ENCODE measurements at regions of chr3 and their contacts with region 1.

Region 1: GRCh38 chr3:132416807-132417694 is at the start of gene DNAJC13:
- DNase-seq: peak; percentile 93
- ATAC-seq: peak; percentile 89
- H3K4me3 Mint-ChIP-seq: peak within 1 kb of the TSS; percentile 99
- H3K27ac Mint-ChIP-seq: peak within 1 kb of the TSS; percentile 98
- H3K4me1 Mint-ChIP-seq: peaks cover 32% of the 10 kb centered on the region
- H3K27me3 Mint-ChIP-seq: no peaks in the 10 kb centered on the region
- CTCF ChIP-seq: no peak
- total RNA-seq, gene DNAJC13: 35.9 and 39.8 TPM in 2 replicates

Region 2: DNA sequence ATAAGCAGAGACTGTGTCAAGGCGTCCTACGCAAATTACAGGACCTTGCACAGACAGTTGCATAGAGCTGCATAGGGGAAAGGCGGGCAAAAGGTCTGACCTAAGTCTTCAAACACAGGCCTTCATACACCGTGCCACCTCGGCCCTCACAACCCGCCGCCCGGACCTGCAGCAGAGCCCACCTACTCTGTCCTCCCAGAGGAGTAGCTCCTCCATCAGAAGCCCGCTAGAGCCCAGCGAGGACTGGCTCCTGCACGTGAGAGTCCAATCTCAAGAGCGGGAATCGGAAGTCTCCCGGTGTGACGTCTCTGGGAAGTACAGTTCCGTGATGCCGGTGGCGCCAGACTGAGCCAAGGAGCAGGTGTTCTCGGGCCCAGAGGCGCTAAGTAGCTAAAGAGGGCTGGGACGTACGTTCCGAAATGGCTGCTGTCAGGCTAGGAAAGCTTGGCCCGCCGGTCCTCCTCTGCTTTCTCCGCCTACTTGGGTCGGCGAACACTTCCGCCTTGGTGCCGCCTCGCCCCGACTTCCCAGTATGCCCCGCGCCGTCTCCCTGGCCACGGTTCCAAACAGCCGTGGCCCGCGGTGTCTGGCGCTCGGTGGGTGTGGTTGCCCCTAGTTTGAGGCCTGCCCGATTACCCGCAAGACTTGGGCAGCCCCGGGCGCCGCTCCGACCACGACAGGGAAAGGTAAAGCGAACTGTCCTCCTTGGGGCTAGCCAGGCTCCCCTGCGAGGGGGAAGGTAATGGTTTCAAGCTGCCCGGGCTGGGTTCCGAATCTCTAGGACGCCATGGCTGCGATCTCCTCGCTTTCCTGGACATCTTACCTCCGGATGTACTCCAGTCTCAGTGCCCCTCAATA is 1390.5 kb before region 1 on chr3 and contains the starts of genes ASTE1 and NEK11:
- CTCF ChIA-PET with region 1: no interaction called
- POLR2A ChIA-PET with region 1: interaction called, 3 read pairs
- intact Hi-C with region 1: loop called (anchors 1 kb)
- DNase-seq: peak; percentile 89
- ATAC-seq: peak; percentile 97
- H3K4me3 Mint-ChIP-seq: peak within 1 kb of the TSS; percentile 96
- H3K27ac Mint-ChIP-seq: peak within 1 kb of the TSS; percentile 97
- H3K4me1 Mint-ChIP-seq: peaks cover 52% of the 10 kb centered on the region
- H3K27me3 Mint-ChIP-seq: no peaks in the 10 kb centered on the region
- CTCF ChIP-seq: no peak
- total RNA-seq, gene ASTE1: 15.6 and 16.9 TPM in 2 replicates
- total RNA-seq, gene NEK11: 1.5 and 1.9 TPM in 2 replicates

Region 3: GRCh38 chr3:131502530-131503245 is 914.4 kb before region 1 on chr3 and contains the start of gene MRPL3:
- CTCF ChIA-PET with region 1: no interaction called
- POLR2A ChIA-PET with region 1: no interaction called
- intact Hi-C with region 1: loop called (anchors 1 kb)
- DNase-seq: peak; percentile 73
- ATAC-seq: peak; percentile 92
- H3K4me3 Mint-ChIP-seq: peak within 1 kb of the TSS; percentile 98
- H3K27ac Mint-ChIP-seq: peak within 1 kb of the TSS; percentile 93
- H3K4me1 Mint-ChIP-seq: peaks cover 38% of the 10 kb centered on the region
- H3K27me3 Mint-ChIP-seq: peaks cover 3% of the 10 kb centered on the region
- CTCF ChIP-seq: no peak
- total RNA-seq, gene MRPL3: 79.9 and 81.7 TPM in 2 replicates

Region 4: GRCh38 chr3:132659365-132660051 is 242.5 kb after region 1 on chr3 and contains the start of gene ACAD11:
- CTCF ChIA-PET with region 1: no interaction called
- POLR2A ChIA-PET with region 1: no interaction called
- intact Hi-C with region 1: loop called (anchors 1 kb)
- DNase-seq: peak; percentile 55
- ATAC-seq: peak; percentile 74
- H3K4me3 Mint-ChIP-seq: peak within 1 kb of the TSS; percentile 97
- H3K27ac Mint-ChIP-seq: peak within 1 kb of the TSS; percentile 93
- H3K4me1 Mint-ChIP-seq: peaks cover 35% of the 10 kb centered on the region
- H3K27me3 Mint-ChIP-seq: no peaks in the 10 kb centered on the region
- CTCF ChIP-seq: no peak
- total RNA-seq, gene ACAD11: 16.4 and 24.0 TPM in 2 replicates

Region 5: GRCh38 chr3:133661454-133662277 is 1244.6 kb after region 1 on chr3 and contains the start of gene TOPBP1:
- CTCF ChIA-PET with region 1: no interaction called
- POLR2A ChIA-PET with region 1: interaction called, 4 read pairs
- intact Hi-C with region 1: loop called (anchors 5 kb)
- DNase-seq: peak; percentile 76
- ATAC-seq: peak; percentile 86
- H3K4me3 Mint-ChIP-seq: peak within 1 kb of the TSS; percentile 98
- H3K27ac Mint-ChIP-seq: peak within 1 kb of the TSS; percentile 95
- H3K4me1 Mint-ChIP-seq: peaks cover 34% of the 10 kb centered on the region
- H3K27me3 Mint-ChIP-seq: no peaks in the 10 kb centered on the region
- CTCF ChIP-seq: no peak
- total RNA-seq, gene TOPBP1: 45.8 and 49.9 TPM in 2 replicates

Region 6: GRCh38 chr3:134250717-134251220 is 1833.7 kb after region 1 on chr3 and contains the start of gene RYK:
- CTCF ChIA-PET with region 1: no interaction called
- POLR2A ChIA-PET with region 1: no interaction called
- intact Hi-C with region 1: loop called (anchors 5 kb)
- DNase-seq: peak; percentile 86
- ATAC-seq: peak; percentile 74
- H3K4me3 Mint-ChIP-seq: peak within 1 kb of the TSS; percentile 94
- H3K27ac Mint-ChIP-seq: peak within 1 kb of the TSS; percentile 92
- H3K4me1 Mint-ChIP-seq: peaks cover 57% of the 10 kb centered on the region
- H3K27me3 Mint-ChIP-seq: no peaks in the 10 kb centered on the region
- CTCF ChIP-seq: no peak
- total RNA-seq, gene RYK: 34.0 and 38.8 TPM in 2 replicates